ENCODE measurements at regions of chr1 and their contacts with region 1.

Region 1: GRCh38 chr1:178768423-178768822 is 43.4 kb downstream of the RALGPS2 start:
- DNase-seq: peak in 5 of 35 experiments; percentile 0 to 56 (median 4)
- ATAC-seq: peak in 1 of 4 experiments; percentile 33
- H3K4me3 ChIP-seq: no peak overlapping the region
- H3K4me3 Mint-ChIP-seq: no peak overlapping the region
- H3K27ac ChIP-seq: no peak overlapping the region
- H3K27ac Mint-ChIP-seq: no peak overlapping the region
- H3K4me1 ChIP-seq: no peaks in the 10 kb centered on the region
- H3K4me1 Mint-ChIP-seq: peaks cover 5 to 17% (median 12%) of the 10 kb centered on the region in 3 donors
- H3K27me3 ChIP-seq: peaks cover 0 to 4% of the 10 kb centered on the region in 2 experiments
- H3K27me3 Mint-ChIP-seq: no peaks in the 10 kb centered on the region

Region 2: DNA sequence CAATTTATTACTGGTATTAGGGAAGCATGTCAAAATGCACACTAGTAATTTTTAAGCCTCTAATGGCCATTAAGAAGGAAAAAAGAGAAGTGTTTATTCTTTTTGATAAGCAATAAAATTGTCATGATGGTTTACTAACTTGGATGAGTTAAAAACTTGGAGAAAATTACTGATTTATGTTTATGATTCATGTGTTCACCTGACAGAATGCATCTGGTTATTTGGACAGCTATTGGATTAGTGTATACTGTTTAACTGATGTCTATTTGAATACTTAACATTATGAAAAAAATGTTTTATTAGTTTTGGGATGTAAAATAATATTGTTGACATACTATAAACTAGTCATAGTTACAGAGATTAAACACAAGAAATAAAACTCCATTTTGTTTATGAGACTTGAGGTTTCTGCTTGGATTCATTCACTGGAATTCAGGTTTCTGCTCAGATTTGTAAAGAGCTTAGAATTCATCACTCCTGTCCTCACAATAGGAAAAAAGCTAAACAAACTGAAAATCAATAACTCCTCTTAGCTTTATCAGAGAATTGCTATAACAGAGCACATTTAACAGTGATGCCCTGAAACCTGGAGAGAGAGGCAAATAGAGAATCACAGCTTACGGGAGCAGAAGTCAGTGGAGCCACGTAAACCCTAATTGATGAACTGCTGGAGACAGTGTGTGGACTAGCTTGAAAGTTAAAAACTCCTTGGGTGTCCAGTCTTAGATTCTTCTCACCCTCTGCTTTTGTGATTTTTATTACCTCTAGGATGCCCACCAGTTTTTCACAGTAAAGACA is 13.3 kb after region 1 on chr1:
- CTCF ChIA-PET with region 1: interaction called in 1 of 2 experiments, 10 read pairs
- POLR2A ChIA-PET with region 1: no interaction called
- DNase-seq: no peak
- ATAC-seq: no peak
- H3K4me3 ChIP-seq: no peak overlapping the region
- H3K4me3 Mint-ChIP-seq: no peak overlapping the region
- H3K27ac ChIP-seq: no peak overlapping the region
- H3K27ac Mint-ChIP-seq: no peak overlapping the region
- H3K4me1 ChIP-seq: peaks cover 0 to 5% of the 10 kb centered on the region in 2 experiments
- H3K4me1 Mint-ChIP-seq: peaks cover 8 to 21% (median 18%) of the 10 kb centered on the region in 3 donors
- H3K27me3 ChIP-seq: no peaks in the 10 kb centered on the region
- H3K27me3 Mint-ChIP-seq: no peaks in the 10 kb centered on the region